AG04450 (cell line): ENCODE measurements at regions of chr6 and their contacts with region 1.

Region 1: GRCh38 chr6:134123666-134124208 is 71.3 kb upstream of the SLC2A12 start:
- DNase-seq: peak; percentile 75
- H3K4me3 ChIP-seq: no peak overlapping the region
- H3K27ac ChIP-seq: no peak overlapping the region
- H3K27me3 ChIP-seq: no peaks in the 10 kb centered on the region
- CTCF ChIP-seq: peak; percentile 63

Region 2: DNA sequence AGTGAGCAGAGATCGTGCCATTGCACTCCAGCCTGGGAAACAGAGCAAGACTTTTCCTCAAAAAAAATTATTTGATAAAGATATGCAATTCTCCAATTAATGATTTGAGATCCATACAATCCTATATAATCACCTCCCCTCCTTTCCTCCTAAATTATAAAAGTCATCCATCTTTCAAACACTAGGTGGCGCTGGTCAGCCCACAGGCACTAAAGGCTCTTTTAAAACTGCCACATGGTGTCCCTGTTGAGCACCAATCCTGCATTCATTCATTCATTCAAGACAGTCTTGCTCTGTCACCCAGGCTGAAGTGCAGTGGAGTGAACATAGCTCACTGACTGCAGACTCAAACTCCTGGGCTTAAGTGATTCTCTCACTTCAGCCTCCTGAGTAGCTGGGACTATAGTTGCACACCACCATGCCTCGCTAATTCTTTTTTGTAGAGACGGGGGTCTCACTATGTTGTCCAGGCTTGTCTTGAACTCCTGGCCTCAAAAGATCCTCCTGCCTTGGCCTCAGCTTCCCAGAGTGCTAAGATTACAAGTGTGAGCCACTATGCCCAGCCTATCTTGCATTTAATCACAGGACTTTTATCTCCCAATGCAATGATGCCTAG is 12.6 kb before region 1 on chr6:
- CTCF ChIA-PET with region 1: interaction called, 70 read pairs
- POLR2A ChIA-PET with region 1: no interaction called
- DNase-seq: no peak
- H3K4me3 ChIP-seq: no peak overlapping the region
- H3K27ac ChIP-seq: no peak overlapping the region
- H3K27me3 ChIP-seq: no peaks in the 10 kb centered on the region
- CTCF ChIP-seq: peak; percentile 76

Region 3: DNA sequence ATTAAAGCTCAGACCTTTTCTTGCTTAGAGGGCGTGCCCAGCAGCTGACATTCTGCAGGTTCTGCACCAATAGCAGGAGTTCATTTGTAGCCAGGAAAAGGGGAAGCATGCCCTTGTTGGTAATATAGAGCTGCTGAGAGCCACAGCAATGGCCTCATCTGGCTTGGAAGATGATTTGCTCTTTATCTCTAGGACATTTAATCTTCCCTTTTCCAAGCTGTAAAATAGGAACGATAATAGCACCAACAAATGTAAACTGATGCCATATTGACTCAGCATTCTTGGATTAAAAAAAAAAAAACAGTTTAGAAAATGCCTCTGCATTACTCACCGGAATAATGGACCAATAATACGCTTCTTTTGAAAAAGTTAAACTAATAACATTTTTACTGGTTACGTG is 22.0 kb after region 1 on chr6:
- CTCF ChIA-PET with region 1: interaction called, 52 read pairs
- POLR2A ChIA-PET with region 1: no interaction called
- DNase-seq: no peak
- H3K4me3 ChIP-seq: no peak overlapping the region
- H3K27ac ChIP-seq: peak overlapping the region; percentile 47
- H3K27me3 ChIP-seq: no peaks in the 10 kb centered on the region
- CTCF ChIP-seq: no peak

Region 4: DNA sequence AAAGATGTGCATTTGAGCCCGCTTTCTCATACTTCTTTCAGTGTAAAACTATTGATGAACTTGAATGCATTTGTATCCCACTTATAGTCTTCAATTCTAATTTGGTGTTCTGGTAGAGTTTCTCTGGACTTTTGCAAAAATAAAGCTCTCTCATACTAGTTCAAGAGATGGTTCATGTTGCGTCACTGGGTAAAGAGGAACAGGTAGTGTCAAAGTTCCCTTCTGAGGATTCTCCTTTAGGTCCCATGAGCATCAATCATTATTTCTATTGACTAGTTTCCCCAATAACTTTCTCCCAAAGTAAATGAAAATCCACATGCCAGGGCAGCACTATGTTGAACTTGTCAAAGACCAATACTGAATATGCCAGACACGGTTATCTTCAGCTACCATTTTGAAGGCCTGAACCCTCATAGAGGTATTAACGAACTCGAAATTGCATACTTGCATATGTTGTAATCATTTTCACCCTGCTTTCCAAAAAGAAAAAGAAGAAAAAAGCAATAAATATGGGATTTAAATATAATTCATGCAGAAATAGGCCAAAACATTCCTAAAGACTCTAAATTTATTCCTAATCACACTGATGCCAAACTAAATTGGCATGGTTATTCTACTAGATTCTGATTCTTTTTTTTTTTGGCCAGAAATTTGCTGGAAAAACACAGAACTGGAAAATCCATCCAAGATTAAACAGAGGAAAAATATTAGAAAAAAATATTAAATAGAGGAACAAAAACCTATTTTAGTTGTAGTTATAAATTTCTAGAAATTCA is 109.6 kb after region 1 on chr6:
- CTCF ChIA-PET with region 1: no interaction called
- POLR2A ChIA-PET with region 1: no interaction called
- DNase-seq: no peak
- H3K4me3 ChIP-seq: no peak overlapping the region
- H3K27ac ChIP-seq: no peak overlapping the region
- H3K27me3 ChIP-seq: no peaks in the 10 kb centered on the region
- CTCF ChIP-seq: no peak

Region 5: GRCh38 chr6:134822920-134823709 is 699.4 kb after region 1 on chr6:
- CTCF ChIA-PET with region 1: interaction called, 11 read pairs
- POLR2A ChIA-PET with region 1: no interaction called
- DNase-seq: peak; percentile 66
- H3K4me3 ChIP-seq: no peak overlapping the region
- H3K27ac ChIP-seq: no peak overlapping the region
- H3K27me3 ChIP-seq: no peaks in the 10 kb centered on the region
- CTCF ChIP-seq: peak; percentile 95